CD4-positive, alpha-beta T cell (primary cell): ENCODE measurements at regions of chr15 and their contacts with region 1.

Region 1: DNA sequence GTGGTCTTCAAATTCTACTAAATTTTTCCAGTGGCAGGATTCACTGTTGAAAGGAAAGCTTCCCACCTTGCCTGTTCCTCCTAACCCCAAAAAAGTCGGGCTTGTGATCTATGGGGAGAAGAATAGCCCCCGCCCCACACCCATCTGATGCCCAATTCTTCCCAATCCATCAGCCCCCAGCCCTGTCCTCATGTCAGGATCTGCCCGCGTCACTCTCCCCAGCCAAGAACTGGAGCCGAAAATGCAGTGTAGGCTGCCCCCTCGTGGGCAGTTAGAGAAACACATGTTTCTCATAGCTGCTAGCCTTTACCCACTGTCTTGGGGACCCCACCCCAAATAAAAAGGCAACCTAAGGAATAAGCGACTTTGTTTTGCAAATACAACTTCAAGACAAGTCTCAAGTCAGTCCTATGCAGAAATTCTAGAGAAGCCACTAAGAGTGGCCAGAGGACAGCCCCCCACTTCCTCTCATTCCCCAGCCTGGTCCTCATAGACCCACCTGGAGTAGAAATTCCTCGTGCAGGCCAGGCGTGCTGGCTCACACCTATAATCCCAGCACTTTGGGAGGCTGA is 13.0 kb upstream of the CSK start:
- DNase-seq: peak in 13 of 14 experiments; percentile 46 to 82 (median 59)
- ATAC-seq: peak; percentile 63
- H3K4me3 ChIP-seq: no peak overlapping the region
- H3K4me3 Mint-ChIP-seq: no peak overlapping the region
- H3K27ac ChIP-seq: no peak overlapping the region
- H3K27ac Mint-ChIP-seq: no peak overlapping the region
- H3K4me1 ChIP-seq: peaks cover 31% of the 10 kb centered on the region
- H3K4me1 Mint-ChIP-seq: peaks cover 28% of the 10 kb centered on the region
- H3K27me3 ChIP-seq: no peaks in the 10 kb centered on the region
- H3K27me3 Mint-ChIP-seq: peaks cover 9% of the 10 kb centered on the region
- CTCF ChIP-seq: peak; percentile 85

Region 2: DNA sequence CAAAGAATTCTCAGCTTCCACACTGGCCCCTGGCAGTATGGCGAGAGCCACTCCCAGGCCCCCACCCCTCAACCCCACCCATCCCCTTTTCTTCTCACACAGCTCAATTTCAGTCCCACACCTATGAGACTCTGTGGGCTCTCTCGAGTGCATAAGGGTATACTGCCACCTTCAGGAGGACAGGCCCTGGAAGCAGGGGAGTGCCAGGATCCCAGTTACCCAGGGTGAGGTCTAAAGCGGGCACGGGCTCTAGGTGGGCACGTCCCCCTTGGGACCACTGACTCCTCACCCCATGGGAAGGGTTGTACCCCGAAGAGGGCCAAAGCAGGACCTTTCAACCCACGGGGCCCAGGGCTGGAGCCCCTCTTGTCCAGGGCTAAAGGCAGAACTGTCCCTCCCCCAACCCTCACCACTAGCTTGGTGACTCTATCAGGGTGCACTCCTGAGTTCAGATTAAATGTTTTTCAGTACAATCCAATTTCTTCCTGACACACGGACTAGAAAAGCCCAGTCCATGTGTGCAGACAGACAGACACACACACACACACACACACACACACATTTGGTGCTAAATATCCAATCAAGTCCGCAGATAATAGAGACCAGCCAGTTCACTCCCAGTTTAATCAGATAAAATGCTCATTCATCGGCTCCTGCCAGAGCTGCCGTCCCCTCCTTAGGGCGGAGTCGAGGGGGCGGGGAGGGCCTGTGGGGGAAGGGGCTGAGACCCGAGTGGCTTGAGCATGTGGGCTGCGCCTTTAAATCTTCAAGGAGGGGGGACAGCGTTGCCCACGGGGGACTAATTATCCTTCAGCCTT is 460.8 kb before region 1 on chr15:
- CTCF ChIA-PET with region 1: no interaction called
- POLR2A ChIA-PET with region 1: no interaction called
- intact Hi-C with region 1: no loop called
- DNase-seq: peak in 6 of 14 experiments; percentile 5 to 49 (median 31)
- ATAC-seq: peak; percentile 56
- H3K4me3 ChIP-seq: no peak overlapping the region
- H3K4me3 Mint-ChIP-seq: no peak overlapping the region
- H3K27ac ChIP-seq: no peak overlapping the region
- H3K27ac Mint-ChIP-seq: no peak overlapping the region
- H3K4me1 ChIP-seq: no peaks in the 10 kb centered on the region
- H3K4me1 Mint-ChIP-seq: no peaks in the 10 kb centered on the region
- H3K27me3 ChIP-seq: peaks cover 7% of the 10 kb centered on the region in 2 experiments
- H3K27me3 Mint-ChIP-seq: peaks cover 47% of the 10 kb centered on the region
- CTCF ChIP-seq: no peak

Region 3: DNA sequence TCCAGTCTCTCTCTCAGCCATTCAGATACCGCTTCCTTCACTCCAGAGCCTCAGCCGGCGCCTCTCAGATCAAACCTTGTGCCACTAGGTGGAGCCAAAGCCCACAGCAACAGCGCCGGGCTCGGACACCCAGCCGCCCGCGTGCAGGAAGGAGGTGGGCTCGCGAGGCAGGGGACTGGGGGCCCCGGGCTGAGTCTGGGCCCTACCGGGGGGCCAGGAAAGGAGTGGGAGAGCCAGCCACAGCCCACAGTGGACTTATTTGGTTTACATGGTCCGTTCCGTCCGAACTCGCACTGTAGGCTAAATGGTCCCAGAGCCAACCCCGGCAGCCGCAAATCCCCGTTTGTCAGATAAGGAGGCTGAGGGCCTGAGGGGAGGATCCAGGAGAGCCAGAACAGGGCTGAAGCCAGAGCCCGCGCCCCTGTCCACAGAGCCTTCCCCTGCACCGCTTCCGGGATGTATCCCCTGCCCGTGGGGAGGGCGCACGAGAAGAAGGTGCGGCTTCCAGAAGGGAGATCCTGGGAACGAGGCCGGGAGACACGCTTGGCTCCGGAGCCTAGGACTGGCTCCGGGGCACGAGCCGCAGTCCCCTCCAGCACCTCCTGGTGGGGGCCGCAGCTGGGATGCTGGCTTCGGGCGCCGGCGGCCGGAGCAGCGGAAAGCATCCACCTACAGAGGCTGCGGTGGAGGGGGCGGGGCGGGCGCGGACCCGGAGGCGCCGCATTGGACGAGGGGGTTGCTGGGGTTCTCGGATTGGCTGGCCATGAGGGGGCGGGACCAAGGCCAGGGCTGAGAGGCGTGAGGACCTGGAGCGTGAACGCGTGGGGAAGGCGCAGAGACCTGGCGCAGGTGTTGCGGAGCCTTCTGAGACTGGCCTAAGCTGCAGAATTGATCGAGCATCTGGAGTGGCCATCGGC is 394.9 kb before region 1 on chr15:
- CTCF ChIA-PET with region 1: no interaction called
- POLR2A ChIA-PET with region 1: no interaction called
- intact Hi-C with region 1: loop called (anchors 2 to 5 kb)
- DNase-seq: peak; percentile 91 to 97 (median 95)
- ATAC-seq: peak; percentile 95
- H3K4me3 ChIP-seq: peak overlapping the region; percentile 94
- H3K4me3 Mint-ChIP-seq: peak overlapping the region; percentile 86
- H3K27ac ChIP-seq: peak overlapping the region; percentile 51 to 54
- H3K27ac Mint-ChIP-seq: peak overlapping the region; percentile 8
- H3K4me1 ChIP-seq: peaks cover 26% of the 10 kb centered on the region
- H3K4me1 Mint-ChIP-seq: peaks cover 12% of the 10 kb centered on the region
- H3K27me3 ChIP-seq: peaks cover 0 to 2% of the 10 kb centered on the region in 2 experiments
- H3K27me3 Mint-ChIP-seq: peaks cover 13% of the 10 kb centered on the region
- CTCF ChIP-seq: peak; percentile 99

Region 4: GRCh38 chr15:74635228-74635627 is 133.6 kb before region 1 on chr15:
- CTCF ChIA-PET with region 1: interaction called, 92 read pairs
- POLR2A ChIA-PET with region 1: interaction called, 11 read pairs
- intact Hi-C with region 1: loop called (anchors 1 kb)
- DNase-seq: peak; percentile 63 to 87 (median 70)
- ATAC-seq: peak; percentile 97
- H3K4me3 ChIP-seq: no peak overlapping the region
- H3K4me3 Mint-ChIP-seq: no peak overlapping the region
- H3K27ac ChIP-seq: no peak overlapping the region
- H3K27ac Mint-ChIP-seq: no peak overlapping the region
- H3K4me1 ChIP-seq: peaks cover 5% of the 10 kb centered on the region
- H3K4me1 Mint-ChIP-seq: no peaks in the 10 kb centered on the region
- H3K27me3 ChIP-seq: no peaks in the 10 kb centered on the region
- H3K27me3 Mint-ChIP-seq: no peaks in the 10 kb centered on the region
- CTCF ChIP-seq: peak; percentile 85

Region 5: DNA sequence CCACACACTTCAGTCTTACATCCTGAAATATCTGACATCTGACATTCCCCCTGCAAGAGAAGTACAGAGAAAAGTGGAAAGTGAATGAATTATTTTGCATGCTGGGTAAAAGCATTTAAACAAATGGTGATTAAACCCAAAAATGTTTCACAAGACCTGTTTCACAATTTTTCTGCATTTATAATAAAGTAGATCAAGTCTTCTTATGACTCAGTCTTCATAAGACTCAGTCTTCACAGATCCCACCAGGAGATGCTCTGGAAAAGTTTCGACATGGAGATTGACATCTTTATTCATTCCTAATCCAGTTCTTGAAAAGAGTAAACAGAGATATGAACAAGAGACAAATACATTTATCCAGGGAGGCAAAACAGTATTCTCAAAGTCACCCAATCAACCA is 59.8 kb before region 1 on chr15:
- CTCF ChIA-PET with region 1: no interaction called
- POLR2A ChIA-PET with region 1: no interaction called
- intact Hi-C with region 1: no loop called
- DNase-seq: no peak
- ATAC-seq: no peak
- H3K4me3 ChIP-seq: no peak overlapping the region
- H3K4me3 Mint-ChIP-seq: no peak overlapping the region
- H3K27ac ChIP-seq: no peak overlapping the region
- H3K27ac Mint-ChIP-seq: no peak overlapping the region
- H3K4me1 ChIP-seq: peaks cover 10% of the 10 kb centered on the region
- H3K4me1 Mint-ChIP-seq: no peaks in the 10 kb centered on the region
- H3K27me3 ChIP-seq: no peaks in the 10 kb centered on the region
- H3K27me3 Mint-ChIP-seq: peaks cover 15% of the 10 kb centered on the region
- CTCF ChIP-seq: no peak

Region 6: GRCh38 chr15:74793135-74794028 is 24.5 kb after region 1 on chr15:
- CTCF ChIA-PET with region 1: interaction called, 353 read pairs
- POLR2A ChIA-PET with region 1: interaction called, 925 read pairs
- intact Hi-C with region 1: loop called (anchors 1 kb)
- DNase-seq: peak; percentile 65 to 88 (median 78)
- ATAC-seq: peak; percentile 47
- H3K4me3 ChIP-seq: peak overlapping the region; percentile 6
- H3K4me3 Mint-ChIP-seq: peak overlapping the region; percentile 74
- H3K27ac ChIP-seq: peak overlapping the region; percentile 58 to 90
- H3K27ac Mint-ChIP-seq: peak overlapping the region; percentile 94
- H3K4me1 ChIP-seq: peaks cover 96% of the 10 kb centered on the region
- H3K4me1 Mint-ChIP-seq: peaks cover 90% of the 10 kb centered on the region
- H3K27me3 ChIP-seq: no peaks in the 10 kb centered on the region
- H3K27me3 Mint-ChIP-seq: no peaks in the 10 kb centered on the region
- CTCF ChIP-seq: peak; percentile 68

Region 7: GRCh38 chr15:74835307-74835823 is 66.5 kb after region 1 on chr15:
- CTCF ChIA-PET with region 1: interaction called, 6 read pairs
- POLR2A ChIA-PET with region 1: no interaction called
- intact Hi-C with region 1: loop called in 1 of 2 experiments (anchors 1 kb)
- DNase-seq: peak in 13 of 14 experiments; percentile 19 to 64 (median 40)
- ATAC-seq: peak; percentile 72
- H3K4me3 ChIP-seq: no peak overlapping the region
- H3K4me3 Mint-ChIP-seq: no peak overlapping the region
- H3K27ac ChIP-seq: no peak overlapping the region
- H3K27ac Mint-ChIP-seq: no peak overlapping the region
- H3K4me1 ChIP-seq: peaks cover under 1% of the 10 kb centered on the region
- H3K4me1 Mint-ChIP-seq: no peaks in the 10 kb centered on the region
- H3K27me3 ChIP-seq: no peaks in the 10 kb centered on the region
- H3K27me3 Mint-ChIP-seq: no peaks in the 10 kb centered on the region
- CTCF ChIP-seq: peak; percentile 81

Region 8: DNA sequence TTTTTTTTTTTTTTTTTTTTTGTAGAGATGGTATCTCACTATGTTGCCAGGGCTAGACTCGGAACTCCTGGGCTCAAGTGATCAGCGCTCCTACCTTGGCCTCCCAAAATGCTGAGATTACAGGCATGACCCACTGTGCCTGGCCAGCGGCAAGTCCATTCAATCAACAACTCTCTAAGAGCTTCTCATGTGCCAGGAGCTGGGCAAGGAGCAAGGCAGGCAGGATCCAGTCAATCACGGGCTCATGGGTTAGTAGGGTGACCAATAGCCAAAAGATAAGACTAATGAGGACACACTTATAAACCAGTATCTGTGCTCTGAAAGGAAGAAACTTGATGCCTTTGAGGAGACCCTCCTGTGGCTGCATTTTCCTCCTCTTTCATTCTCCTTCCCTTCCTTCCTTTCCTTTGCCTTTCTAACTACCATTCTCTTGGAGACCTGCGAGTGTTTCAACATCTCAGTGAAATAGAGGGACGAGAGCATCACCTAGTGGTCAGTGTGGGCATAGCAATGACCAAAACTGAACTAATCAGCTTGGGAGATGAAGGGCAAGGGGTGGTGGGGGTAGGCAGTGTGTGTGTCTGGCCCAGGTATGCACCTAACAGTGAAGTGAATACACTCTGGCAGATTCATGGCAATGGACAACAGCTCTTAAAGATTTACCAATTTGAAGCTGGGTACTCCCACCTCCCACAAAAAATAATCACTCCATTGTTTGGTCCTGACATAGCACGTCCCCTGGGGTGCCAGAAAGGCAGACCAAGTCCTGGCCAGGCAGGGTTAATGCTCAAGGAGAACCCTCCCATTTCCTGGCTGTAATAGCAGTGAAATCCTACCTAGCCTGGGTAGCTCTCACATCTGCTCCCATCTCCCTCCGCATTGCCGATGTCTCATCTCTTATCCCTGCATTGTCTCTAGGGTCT is 181.5 kb after region 1 on chr15:
- CTCF ChIA-PET with region 1: interaction called, 5 read pairs
- POLR2A ChIA-PET with region 1: interaction called, 3 read pairs
- intact Hi-C with region 1: loop called (anchors 1 kb)
- DNase-seq: peak; percentile 58 to 87 (median 76)
- ATAC-seq: peak; percentile 96
- H3K4me3 ChIP-seq: no peak overlapping the region
- H3K4me3 Mint-ChIP-seq: no peak overlapping the region
- H3K27ac ChIP-seq: no peak overlapping the region
- H3K27ac Mint-ChIP-seq: no peak overlapping the region
- H3K4me1 ChIP-seq: peaks cover 4% of the 10 kb centered on the region
- H3K4me1 Mint-ChIP-seq: peaks cover 5% of the 10 kb centered on the region
- H3K27me3 ChIP-seq: peaks cover 0 to 6% of the 10 kb centered on the region in 2 experiments
- H3K27me3 Mint-ChIP-seq: no peaks in the 10 kb centered on the region
- CTCF ChIP-seq: peak; percentile 97